ENCODE measurements at regions of chr2 and their contacts with region 1.

Region 1: DNA sequence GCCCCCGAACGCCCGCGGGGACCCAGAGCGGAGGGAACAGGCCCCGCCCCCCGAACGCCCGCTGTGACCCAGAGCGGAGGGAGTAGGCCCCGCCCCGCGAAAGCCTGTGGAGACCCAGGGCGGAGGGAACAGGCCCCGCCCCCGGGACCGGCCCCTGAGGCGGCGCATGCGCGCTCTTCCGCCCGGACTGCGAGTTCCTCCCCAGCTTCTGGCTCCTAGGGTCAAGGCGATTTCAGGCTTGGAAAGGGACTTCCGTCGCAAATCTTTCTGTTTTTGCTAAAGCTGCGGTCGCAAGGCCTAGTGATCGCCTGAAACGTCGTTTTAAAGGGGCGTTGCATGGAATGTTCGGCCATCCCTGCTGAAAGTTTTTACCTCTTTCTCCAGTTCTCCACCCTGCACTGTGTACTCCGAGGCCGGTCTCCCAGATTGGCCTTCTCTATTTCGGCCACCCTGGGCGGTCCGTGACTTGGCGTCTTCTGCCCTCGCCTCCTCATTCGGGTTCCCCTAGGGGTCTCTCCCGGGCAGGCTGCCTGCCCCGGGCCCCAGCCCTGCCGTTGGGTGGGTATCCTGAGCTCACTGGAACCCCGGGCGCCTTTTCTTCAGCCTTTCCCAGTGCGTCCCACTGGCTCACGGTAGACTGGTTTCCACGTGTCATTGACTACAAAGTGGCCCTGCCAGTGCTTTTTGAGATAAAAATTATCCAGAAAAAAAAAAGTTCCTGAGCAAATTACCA is 372 bp upstream of the WDSUB1 start:
- DNase-seq: peak; percentile 98
- H3K4me3 Mint-ChIP-seq: peak overlapping the region; percentile 85
- H3K27ac Mint-ChIP-seq: no peak overlapping the region
- H3K4me1 Mint-ChIP-seq: peaks cover 26% of the 10 kb centered on the region
- H3K27me3 Mint-ChIP-seq: no peaks in the 10 kb centered on the region
- CTCF ChIP-seq: no peak

Region 2: DNA sequence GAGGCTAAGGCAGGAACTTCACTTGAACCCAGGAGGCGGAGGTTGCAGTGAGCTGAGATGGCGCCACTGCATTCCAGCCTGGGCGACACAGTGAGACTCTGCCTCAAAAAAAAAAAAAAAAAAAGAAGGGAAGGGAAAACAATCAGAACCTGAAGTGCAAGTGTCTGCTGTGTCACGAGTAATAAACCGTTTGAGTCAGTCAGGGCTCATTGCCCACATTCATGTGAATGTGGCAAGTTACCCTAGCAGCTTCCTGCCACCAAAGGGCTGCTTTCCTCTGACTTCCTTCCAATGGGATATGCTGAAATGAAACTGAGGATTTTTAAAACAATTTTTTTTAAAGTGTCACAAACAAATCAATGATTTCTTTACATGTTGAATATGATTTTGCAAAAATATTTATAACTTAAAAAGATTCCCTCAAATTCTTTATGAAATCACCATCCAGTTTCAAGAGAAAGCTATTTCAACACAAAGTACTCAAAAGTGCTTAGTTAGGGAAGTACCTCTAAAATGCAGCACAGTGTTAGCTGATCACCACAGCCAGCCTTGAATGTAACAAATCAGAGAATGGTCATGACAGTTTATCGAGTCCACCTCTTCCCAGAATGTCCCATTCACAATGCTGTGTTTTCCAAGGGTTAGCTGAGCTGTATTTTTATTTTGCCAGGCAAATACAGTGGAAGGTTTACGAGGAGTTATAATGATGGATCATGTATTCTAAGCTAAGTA is 36.7 kb before region 1 on chr2:
- CTCF ChIA-PET with region 1: interaction called, 3 read pairs
- POLR2A ChIA-PET with region 1: interaction called, 14 read pairs
- intact Hi-C with region 1: no loop called
- DNase-seq: peak; percentile 89
- H3K4me3 Mint-ChIP-seq: no peak overlapping the region
- H3K27ac Mint-ChIP-seq: peak overlapping the region; percentile 66
- H3K4me1 Mint-ChIP-seq: peaks cover 6% of the 10 kb centered on the region
- H3K27me3 Mint-ChIP-seq: no peaks in the 10 kb centered on the region
- CTCF ChIP-seq: no peak

Region 3: GRCh38 chr2:159272156-159272555 is 14.7 kb before region 1 on chr2:
- CTCF ChIA-PET with region 1: no interaction called
- POLR2A ChIA-PET with region 1: interaction called, 15 read pairs
- intact Hi-C with region 1: no loop called
- DNase-seq: no peak
- H3K4me3 Mint-ChIP-seq: no peak overlapping the region
- H3K27ac Mint-ChIP-seq: no peak overlapping the region
- H3K4me1 Mint-ChIP-seq: peaks cover 6% of the 10 kb centered on the region
- H3K27me3 Mint-ChIP-seq: no peaks in the 10 kb centered on the region
- CTCF ChIP-seq: no peak

Region 4: DNA sequence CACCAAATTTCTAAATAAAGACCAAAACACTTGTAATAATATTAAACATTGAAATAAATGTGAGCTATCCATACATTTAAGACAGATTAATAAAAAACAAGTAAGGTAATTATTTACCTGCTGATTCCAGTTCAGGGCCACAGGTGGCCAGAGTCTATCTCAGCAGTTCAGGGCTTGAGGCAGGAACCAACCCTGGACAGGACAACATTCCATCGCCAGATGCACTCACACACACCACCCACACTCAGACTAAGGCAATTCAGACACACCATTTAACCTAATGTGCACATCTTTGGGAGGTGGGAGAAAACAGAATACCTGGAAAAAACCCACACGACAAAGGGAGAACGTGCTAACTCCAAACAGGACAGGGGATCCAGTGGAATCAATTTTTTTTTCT is 13.7 kb after region 1 on chr2:
- CTCF ChIA-PET with region 1: interaction called, 3 read pairs
- POLR2A ChIA-PET with region 1: interaction called, 11 read pairs
- intact Hi-C with region 1: no loop called
- DNase-seq: no peak
- H3K4me3 Mint-ChIP-seq: no peak overlapping the region
- H3K27ac Mint-ChIP-seq: no peak overlapping the region
- H3K4me1 Mint-ChIP-seq: no peaks in the 10 kb centered on the region
- H3K27me3 Mint-ChIP-seq: no peaks in the 10 kb centered on the region
- CTCF ChIP-seq: no peak

Region 5: GRCh38 chr2:159326569-159327255 is 39.8 kb after region 1 on chr2:
- CTCF ChIA-PET with region 1: no interaction called
- POLR2A ChIA-PET with region 1: interaction called, 10 read pairs
- intact Hi-C with region 1: no loop called
- DNase-seq: peak; percentile 81
- H3K4me3 Mint-ChIP-seq: no peak overlapping the region
- H3K27ac Mint-ChIP-seq: peak overlapping the region; percentile 72
- H3K4me1 Mint-ChIP-seq: peaks cover 6% of the 10 kb centered on the region
- H3K27me3 Mint-ChIP-seq: no peaks in the 10 kb centered on the region
- CTCF ChIP-seq: no peak

Region 6: GRCh38 chr2:159531475-159531874 is 244.6 kb after region 1 on chr2:
- CTCF ChIA-PET with region 1: no interaction called
- POLR2A ChIA-PET with region 1: no interaction called
- intact Hi-C with region 1: no loop called
- DNase-seq: no peak
- H3K4me3 Mint-ChIP-seq: no peak overlapping the region
- H3K27ac Mint-ChIP-seq: no peak overlapping the region
- H3K4me1 Mint-ChIP-seq: no peaks in the 10 kb centered on the region
- H3K27me3 Mint-ChIP-seq: no peaks in the 10 kb centered on the region
- CTCF ChIP-seq: no peak

Measured in MCF 10A (cell line).